PC-9 (cell line): ENCODE measurements at regions of chr12 and their contacts with region 1.

Region 1: GRCh38 chr12:64696080-64696741 is 63.0 kb downstream of the GNS start:
- DNase-seq: peak in 1 of 2 experiments; percentile 37
- H3K4me3 ChIP-seq: no peak overlapping the region
- H3K27ac ChIP-seq: no peak overlapping the region
- H3K4me1 ChIP-seq: peaks cover 12% of the 10 kb centered on the region
- H3K27me3 ChIP-seq: no peaks in the 10 kb centered on the region
- CTCF ChIP-seq: peak; percentile 72

Region 2: GRCh38 chr12:63826006-63826585 is 870.1 kb before region 1 on chr12:
- CTCF ChIA-PET with region 1: no interaction called
- POLR2A ChIA-PET with region 1: no interaction called
- intact Hi-C with region 1: loop called (anchors 5 kb)
- DNase-seq: peak in 1 of 2 experiments; percentile 49
- H3K4me3 ChIP-seq: no peak overlapping the region
- H3K27ac ChIP-seq: no peak overlapping the region
- H3K4me1 ChIP-seq: no peaks in the 10 kb centered on the region
- H3K27me3 ChIP-seq: no peaks in the 10 kb centered on the region
- CTCF ChIP-seq: peak; percentile 85

Region 3: DNA sequence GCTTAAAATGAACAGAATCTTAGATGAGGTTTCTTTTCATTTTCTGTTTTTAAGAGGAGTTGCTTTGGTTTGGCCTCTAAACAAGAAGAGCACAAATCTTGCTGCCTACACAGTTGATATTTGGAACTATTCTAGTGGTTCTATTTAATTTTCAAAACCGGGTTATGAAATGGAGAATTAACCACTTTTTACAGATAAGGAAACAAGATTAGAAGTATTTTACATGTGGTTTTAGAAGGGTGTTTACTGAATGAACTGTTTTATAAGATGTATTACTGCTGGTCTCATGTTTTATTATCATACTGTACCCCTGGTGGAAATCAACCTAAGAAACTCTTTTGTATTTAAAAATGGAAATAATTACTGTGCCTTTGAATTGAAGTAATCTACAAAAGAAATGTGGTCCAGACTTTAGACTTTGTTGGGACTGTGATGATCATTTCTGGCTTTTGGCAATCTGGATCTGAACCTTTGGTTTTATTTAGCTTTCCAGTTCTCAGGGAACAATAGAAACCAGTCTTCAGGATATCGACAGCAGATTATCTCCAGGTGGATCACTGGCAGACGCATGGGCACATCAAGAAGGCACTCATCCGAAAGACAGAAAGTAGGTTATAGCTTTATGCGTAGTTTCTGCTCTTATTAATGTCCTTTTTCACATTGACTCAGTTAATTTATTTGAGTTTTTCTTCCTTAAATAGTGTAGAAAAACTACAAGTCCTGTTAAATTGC is 201.0 kb before region 1 on chr12:
- CTCF ChIA-PET with region 1: no interaction called
- POLR2A ChIA-PET with region 1: no interaction called
- intact Hi-C with region 1: loop called (anchors 5 kb)
- DNase-seq: no peak
- H3K4me3 ChIP-seq: no peak overlapping the region
- H3K27ac ChIP-seq: no peak overlapping the region
- H3K4me1 ChIP-seq: no peaks in the 10 kb centered on the region
- H3K27me3 ChIP-seq: no peaks in the 10 kb centered on the region
- CTCF ChIP-seq: no peak

Region 4: DNA sequence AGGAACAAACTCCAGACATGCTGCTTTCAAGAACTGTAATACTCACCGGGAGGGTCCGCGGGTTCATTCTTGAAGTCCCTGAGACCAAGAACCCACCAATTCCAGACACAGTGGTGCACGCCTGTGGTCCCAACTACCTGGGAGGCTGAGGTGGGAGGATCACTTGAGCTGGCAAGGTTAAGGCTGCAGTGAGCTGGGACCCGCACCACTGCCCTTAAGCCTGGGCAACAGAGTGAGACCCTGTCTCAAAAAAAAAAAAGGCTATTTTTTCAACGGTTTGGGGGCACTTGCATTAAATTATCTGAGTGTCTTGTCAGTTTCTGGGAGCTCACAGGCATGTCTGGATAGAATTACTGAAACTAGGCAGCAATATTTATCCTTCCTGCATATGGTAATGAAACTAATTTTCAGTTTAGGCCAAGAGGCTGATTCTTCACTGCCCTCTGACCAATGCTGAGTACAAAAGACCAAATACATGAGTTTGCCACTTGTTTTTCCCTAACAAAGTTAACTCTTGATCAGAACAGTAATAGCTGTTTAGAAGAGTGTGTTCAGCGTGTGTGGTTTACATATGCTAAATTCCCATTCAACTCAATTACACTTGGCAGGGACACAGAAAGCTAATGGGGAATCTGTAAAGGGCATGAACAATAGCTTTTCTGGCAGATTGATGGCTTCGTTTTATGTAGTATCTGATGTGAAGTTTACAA is 151.7 kb before region 1 on chr12:
- CTCF ChIA-PET with region 1: interaction called, 7 read pairs
- POLR2A ChIA-PET with region 1: no interaction called
- intact Hi-C with region 1: loop called (anchors 1 kb)
- DNase-seq: no peak
- H3K4me3 ChIP-seq: no peak overlapping the region
- H3K27ac ChIP-seq: no peak overlapping the region
- H3K4me1 ChIP-seq: no peaks in the 10 kb centered on the region
- H3K27me3 ChIP-seq: no peaks in the 10 kb centered on the region
- CTCF ChIP-seq: no peak

Region 5: DNA sequence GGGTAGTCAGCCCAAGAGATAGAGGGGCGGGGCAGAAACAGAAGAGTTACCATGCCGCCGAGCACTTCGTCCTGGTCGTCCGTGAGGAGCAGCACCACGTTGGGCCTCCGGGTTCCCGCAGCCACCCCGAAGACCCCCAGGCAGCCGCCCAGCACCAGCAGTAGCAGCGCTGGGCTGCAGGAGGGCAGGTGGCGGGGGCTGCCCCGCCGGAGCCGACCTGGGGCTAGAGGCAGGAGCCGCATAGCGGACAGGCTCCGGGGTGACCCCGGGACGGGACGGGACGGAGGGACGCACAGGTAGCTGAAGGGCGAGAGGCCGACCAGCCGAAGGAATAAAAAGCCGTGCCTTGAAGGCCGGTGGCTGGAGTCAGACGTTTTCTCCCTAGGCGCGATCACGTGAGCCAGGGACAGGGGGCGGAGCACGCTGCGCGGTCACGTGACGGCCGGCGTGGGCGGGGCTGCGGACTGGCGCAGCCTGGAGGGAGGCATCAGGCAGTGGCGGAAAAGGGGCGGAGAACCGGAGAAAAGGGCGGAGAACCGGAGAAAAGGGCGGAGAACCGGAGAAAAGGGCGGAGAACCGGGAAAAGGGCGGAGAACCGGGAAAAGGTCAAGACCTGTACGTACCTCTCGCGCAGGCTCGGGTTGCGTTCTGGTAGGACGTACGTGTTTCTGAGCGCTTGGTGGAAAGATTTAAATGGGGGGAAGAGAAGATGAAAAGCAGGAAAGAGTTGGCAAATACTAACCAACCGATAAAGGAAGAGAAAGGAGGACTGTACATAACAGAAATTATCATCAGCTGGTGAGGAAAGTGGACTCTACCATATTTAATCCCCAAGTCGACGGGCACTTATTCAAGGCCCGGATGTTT is 63.1 kb after region 1 on chr12 and contains the start of gene GNS:
- CTCF ChIA-PET with region 1: interaction called, 23 read pairs
- POLR2A ChIA-PET with region 1: no interaction called
- intact Hi-C with region 1: no loop called
- DNase-seq: peak; percentile 82 to 97
- H3K4me3 ChIP-seq: peak within 1 kb of the TSS; percentile 66
- H3K27ac ChIP-seq: peak within 1 kb of the TSS; percentile 63
- H3K4me1 ChIP-seq: peaks cover 24% of the 10 kb centered on the region
- H3K27me3 ChIP-seq: no peaks in the 10 kb centered on the region
- CTCF ChIP-seq: no peak
- total RNA-seq, gene GNS: 68.4 and 74.9 TPM in 2 replicates